Mammary epithelial cell (primary cell): ENCODE measurements at regions of chr11 and their contacts with region 1.

Region 1: DNA sequence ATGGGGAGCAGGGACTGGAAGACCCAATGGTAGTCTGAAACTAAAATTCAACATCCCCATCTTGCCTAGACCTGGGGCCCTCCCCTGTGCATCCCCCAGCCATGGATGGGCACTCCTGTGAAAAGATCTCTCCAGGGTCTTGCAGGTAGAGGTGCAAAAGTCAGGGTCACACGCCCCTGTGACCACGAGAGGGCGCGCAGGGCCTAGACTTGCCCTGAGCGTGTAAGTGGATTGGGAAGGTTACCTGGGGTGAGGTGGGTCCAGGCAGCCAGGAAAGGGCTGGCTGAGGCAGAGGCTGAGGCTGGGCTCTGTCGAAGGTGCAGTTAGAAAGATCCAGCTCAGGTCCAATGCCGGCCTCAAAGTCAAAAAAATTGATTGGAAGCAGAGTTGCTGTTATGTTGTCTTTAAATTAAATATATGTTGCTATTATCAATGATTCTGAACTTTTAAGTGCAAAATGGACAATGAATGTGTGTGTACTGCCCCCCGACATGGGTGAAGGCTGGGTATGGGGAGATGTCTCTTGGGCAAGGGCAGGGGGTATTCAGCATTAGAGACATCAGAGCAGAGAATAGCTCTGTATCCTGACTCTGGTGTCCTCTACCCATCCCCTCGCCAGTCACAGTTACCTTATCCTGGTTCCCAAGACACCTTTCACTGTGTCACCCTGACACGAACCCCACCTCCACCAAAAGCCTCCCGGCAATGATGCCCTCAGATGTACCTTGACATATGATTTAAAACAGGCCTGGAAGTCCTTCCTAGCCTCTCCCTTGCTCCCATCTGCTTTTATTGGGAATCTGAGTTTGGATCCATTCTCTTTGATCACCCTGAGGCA is 4.7 kb upstream of the POU2F3 start:
- DNase-seq: peak; percentile 62
- H3K4me3 ChIP-seq: no peak overlapping the region
- H3K27ac ChIP-seq: no peak overlapping the region
- H3K4me1 ChIP-seq: peaks cover 19% of the 10 kb centered on the region
- H3K27me3 ChIP-seq: peaks cover 5% of the 10 kb centered on the region
- CTCF ChIP-seq: peak; percentile 88 to 97

Region 2: GRCh38 chr11:120128782-120129172 is 106.5 kb before region 1 on chr11:
- CTCF ChIA-PET with region 1: no interaction called
- dilution Hi-C with region 1: no loop called
- in situ Hi-C with region 1: no loop called
- intact Hi-C with region 1: loop called (anchors 5 kb)
- DNase-seq: peak; percentile 95
- H3K4me3 ChIP-seq: peak overlapping the region in 1 of 3 experiments; percentile 24
- H3K27ac ChIP-seq: peak overlapping the region; percentile 97
- H3K4me1 ChIP-seq: peaks cover 82% of the 10 kb centered on the region
- H3K27me3 ChIP-seq: no peaks in the 10 kb centered on the region
- CTCF ChIP-seq: no peak

Region 3: GRCh38 chr11:120303004-120303637 is 67.9 kb after region 1 on chr11:
- CTCF ChIA-PET with region 1: interaction called, 16 read pairs
- dilution Hi-C with region 1: no loop called
- in situ Hi-C with region 1: loop called (anchors 5 kb)
- intact Hi-C with region 1: loop called (anchors 1 kb)
- DNase-seq: peak; percentile 71
- H3K4me3 ChIP-seq: no peak overlapping the region
- H3K27ac ChIP-seq: no peak overlapping the region
- H3K4me1 ChIP-seq: peaks cover 39% of the 10 kb centered on the region
- H3K27me3 ChIP-seq: no peaks in the 10 kb centered on the region
- CTCF ChIP-seq: peak; percentile 97 to 98

Region 4: GRCh38 chr11:120432056-120433018 is 197.1 kb after region 1 on chr11:
- CTCF ChIA-PET with region 1: no interaction called
- dilution Hi-C with region 1: no loop called
- in situ Hi-C with region 1: no loop called
- intact Hi-C with region 1: loop called (anchors 10 kb)
- DNase-seq: peak; percentile 97
- H3K4me3 ChIP-seq: no peak overlapping the region
- H3K27ac ChIP-seq: peak overlapping the region; percentile 71
- H3K4me1 ChIP-seq: peaks cover 12% of the 10 kb centered on the region
- H3K27me3 ChIP-seq: no peaks in the 10 kb centered on the region
- CTCF ChIP-seq: no peak

Region 5: DNA sequence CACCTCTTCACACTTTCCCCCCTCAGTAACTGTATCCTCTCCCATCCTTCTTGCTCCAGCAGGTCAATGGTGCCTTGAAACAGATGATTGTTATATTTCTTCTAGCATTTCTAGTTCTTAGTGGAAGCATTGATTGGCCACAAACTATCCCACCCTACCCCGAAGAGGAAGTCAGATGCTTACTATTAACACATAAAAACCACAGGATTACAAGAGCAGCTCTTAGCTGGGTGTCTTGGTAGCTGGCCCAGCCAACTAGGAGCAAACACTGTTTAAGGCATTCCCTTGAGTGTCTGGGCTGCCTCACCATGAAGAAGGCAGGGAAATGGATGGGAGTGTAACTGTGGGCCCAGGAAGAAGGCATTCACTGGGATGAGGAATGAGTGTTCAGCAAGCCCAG is 452.9 kb after region 1 on chr11:
- CTCF ChIA-PET with region 1: no interaction called
- dilution Hi-C with region 1: no loop called
- in situ Hi-C with region 1: no loop called
- intact Hi-C with region 1: loop called (anchors 5 kb)
- DNase-seq: no peak
- H3K4me3 ChIP-seq: no peak overlapping the region
- H3K27ac ChIP-seq: no peak overlapping the region
- H3K4me1 ChIP-seq: no peaks in the 10 kb centered on the region
- H3K27me3 ChIP-seq: peaks cover 1% of the 10 kb centered on the region
- CTCF ChIP-seq: no peak

Region 6: GRCh38 chr11:121112498-121113455 is 877.5 kb after region 1 on chr11:
- CTCF ChIA-PET with region 1: no interaction called
- dilution Hi-C with region 1: no loop called
- in situ Hi-C with region 1: no loop called
- intact Hi-C with region 1: loop called (anchors 5 kb)
- DNase-seq: peak; percentile 56
- H3K4me3 ChIP-seq: no peak overlapping the region
- H3K27ac ChIP-seq: no peak overlapping the region
- H3K4me1 ChIP-seq: no peaks in the 10 kb centered on the region
- H3K27me3 ChIP-seq: no peaks in the 10 kb centered on the region
- CTCF ChIP-seq: peak; percentile 38 to 57